ENCODE measurements at regions of chr7 and their contacts with region 1.

Region 1: DNA sequence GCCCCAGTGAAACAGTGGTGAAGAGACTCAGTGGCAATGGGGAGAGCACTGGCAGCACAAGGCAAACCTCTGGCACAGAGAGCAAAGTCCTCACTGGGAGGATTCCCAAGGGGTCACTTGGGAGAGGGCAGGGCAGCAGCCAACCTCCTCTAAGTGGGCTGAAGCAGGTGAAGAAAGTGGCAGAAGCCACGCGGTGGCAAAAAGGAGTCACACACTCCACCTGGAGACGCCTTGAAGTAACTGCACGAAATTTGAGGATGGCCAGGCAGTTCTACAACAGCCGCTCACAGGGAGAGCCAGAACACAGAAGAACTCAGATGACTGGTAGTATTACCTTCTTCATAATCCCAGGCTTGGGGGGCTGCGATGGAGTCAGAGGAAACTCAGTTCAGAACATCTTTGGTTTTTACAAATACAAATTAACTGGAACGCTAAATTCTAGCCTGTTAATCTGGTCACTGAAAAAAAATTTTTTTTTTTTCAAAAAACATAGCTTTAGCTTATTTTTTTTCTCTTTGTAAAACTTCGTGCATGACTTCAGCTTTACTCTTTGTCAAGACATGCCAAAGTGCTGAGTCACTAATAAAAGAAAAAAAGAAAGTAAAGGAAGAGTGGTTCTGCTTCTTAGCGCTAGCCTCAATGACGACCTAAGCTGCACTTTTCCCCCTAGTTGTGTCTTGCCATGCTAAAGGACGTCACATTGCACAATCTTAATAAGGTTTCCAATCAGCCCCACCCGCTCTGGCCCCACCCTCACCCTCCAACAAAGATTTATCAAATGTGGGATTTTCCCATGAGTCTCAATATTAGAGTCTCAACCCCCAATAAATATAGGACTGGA is 435 bp upstream of the IL6 start:
- DNase-seq: peak; percentile 76
- ATAC-seq: peak; percentile 93
- H3K4me3 Mint-ChIP-seq: peak overlapping the region; percentile 56
- H3K27ac Mint-ChIP-seq: peak overlapping the region; percentile 63
- H3K4me1 Mint-ChIP-seq: peaks cover 60% of the 10 kb centered on the region
- H3K27me3 Mint-ChIP-seq: peaks cover 30% of the 10 kb centered on the region

Region 2: DNA sequence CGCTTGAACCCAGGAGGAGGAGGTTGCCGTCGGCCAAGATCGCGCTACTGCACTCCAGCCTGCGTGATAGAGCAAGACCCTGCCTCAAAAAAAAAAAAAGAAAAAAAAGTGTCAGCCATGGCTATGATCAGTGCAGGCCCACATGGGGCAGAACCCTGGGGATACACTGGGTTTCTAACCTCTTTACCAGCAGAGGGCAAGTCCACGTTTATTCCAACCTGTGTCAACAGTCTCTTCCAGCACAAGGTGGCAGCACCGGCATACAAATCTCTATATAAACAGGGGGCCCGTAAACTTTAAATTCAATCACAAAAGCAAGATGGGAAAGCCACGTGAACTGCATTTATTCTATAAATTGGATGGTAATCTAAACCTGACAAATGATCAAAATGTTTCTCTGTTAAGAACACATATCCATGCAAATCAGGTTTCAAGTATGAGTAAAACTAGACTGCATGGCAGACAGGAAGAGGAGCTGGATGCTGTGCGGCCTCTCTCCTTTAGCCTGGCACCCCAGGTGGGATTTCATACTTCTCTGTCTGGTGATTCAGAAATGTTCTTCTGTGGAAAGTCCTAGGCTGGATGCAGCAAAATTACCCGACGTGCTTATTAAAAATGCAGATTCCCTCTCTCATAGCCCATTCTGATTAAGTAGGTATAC is 166.6 kb before region 1 on chr7:
- CTCF ChIA-PET with region 1: interaction called, 457 read pairs
- POLR2A ChIA-PET with region 1: interaction called, 3 read pairs
- DNase-seq: peak; percentile 86
- ATAC-seq: peak; percentile 79
- H3K4me3 Mint-ChIP-seq: no peak overlapping the region
- H3K27ac Mint-ChIP-seq: no peak overlapping the region
- H3K4me1 Mint-ChIP-seq: peaks cover 51% of the 10 kb centered on the region
- H3K27me3 Mint-ChIP-seq: peaks cover 14% of the 10 kb centered on the region

Region 3: GRCh38 chr7:22672846-22673652 is 53.5 kb before region 1 on chr7:
- CTCF ChIA-PET with region 1: interaction called, 37 read pairs
- POLR2A ChIA-PET with region 1: no interaction called
- DNase-seq: peak; percentile 49
- ATAC-seq: peak; percentile 61
- H3K4me3 Mint-ChIP-seq: peak overlapping the region; percentile 48
- H3K27ac Mint-ChIP-seq: peak overlapping the region; percentile 83
- H3K4me1 Mint-ChIP-seq: peaks cover 67% of the 10 kb centered on the region
- H3K27me3 Mint-ChIP-seq: peaks cover 2% of the 10 kb centered on the region

Region 4: GRCh38 chr7:22697876-22698606 is 28.5 kb before region 1 on chr7:
- CTCF ChIA-PET with region 1: interaction called, 15 read pairs
- POLR2A ChIA-PET with region 1: no interaction called
- DNase-seq: peak; percentile 36
- ATAC-seq: peak; percentile 64
- H3K4me3 Mint-ChIP-seq: peak overlapping the region; percentile 0
- H3K27ac Mint-ChIP-seq: peak overlapping the region; percentile 77
- H3K4me1 Mint-ChIP-seq: peaks cover 79% of the 10 kb centered on the region
- H3K27me3 Mint-ChIP-seq: no peaks in the 10 kb centered on the region

Region 5: DNA sequence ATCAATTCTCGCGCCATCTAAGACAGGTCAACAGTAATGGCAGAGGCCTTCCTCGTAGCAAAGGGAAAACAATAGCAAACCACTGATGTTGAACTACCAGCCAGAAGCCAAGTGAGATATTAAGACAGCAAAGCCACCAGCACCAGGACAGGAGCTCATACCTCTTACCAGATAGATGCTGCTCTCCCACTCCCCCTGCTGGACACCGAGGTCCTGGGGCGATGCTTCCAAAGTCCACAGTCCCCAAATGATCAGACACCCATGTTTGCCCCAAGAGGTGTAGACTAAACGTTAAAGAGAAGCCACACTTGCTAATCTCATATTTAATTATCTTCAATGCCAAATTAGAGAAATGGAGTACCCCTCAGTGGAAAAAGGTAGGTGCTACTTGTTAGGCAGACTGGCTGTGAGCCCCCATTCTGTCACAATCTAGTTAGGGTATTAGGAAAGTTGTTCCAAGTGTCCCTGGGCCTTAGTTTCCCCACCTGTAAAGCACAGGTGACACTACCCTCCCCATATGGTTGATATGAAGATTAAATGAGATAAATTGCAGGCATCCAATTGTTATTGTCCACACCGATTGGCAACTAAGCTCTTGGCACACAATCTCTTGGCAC is 56.2 kb after region 1 on chr7:
- CTCF ChIA-PET with region 1: interaction called, 34 read pairs
- POLR2A ChIA-PET with region 1: no interaction called
- DNase-seq: peak; percentile 85
- ATAC-seq: peak; percentile 92
- H3K4me3 Mint-ChIP-seq: no peak overlapping the region
- H3K27ac Mint-ChIP-seq: no peak overlapping the region
- H3K4me1 Mint-ChIP-seq: no peaks in the 10 kb centered on the region
- H3K27me3 Mint-ChIP-seq: peaks cover 22% of the 10 kb centered on the region

Measured in activated CD8-positive, alpha-beta T cell treated with anti-CD3 and anti-CD28 coated beads, Interleukin-2, amount 10 ng/mL, durations not matched to agents 7 days and 5 days (primary cell).